BJ (cell line): ENCODE measurements at regions of chr6 and their contacts with region 1.

Region 1: DNA sequence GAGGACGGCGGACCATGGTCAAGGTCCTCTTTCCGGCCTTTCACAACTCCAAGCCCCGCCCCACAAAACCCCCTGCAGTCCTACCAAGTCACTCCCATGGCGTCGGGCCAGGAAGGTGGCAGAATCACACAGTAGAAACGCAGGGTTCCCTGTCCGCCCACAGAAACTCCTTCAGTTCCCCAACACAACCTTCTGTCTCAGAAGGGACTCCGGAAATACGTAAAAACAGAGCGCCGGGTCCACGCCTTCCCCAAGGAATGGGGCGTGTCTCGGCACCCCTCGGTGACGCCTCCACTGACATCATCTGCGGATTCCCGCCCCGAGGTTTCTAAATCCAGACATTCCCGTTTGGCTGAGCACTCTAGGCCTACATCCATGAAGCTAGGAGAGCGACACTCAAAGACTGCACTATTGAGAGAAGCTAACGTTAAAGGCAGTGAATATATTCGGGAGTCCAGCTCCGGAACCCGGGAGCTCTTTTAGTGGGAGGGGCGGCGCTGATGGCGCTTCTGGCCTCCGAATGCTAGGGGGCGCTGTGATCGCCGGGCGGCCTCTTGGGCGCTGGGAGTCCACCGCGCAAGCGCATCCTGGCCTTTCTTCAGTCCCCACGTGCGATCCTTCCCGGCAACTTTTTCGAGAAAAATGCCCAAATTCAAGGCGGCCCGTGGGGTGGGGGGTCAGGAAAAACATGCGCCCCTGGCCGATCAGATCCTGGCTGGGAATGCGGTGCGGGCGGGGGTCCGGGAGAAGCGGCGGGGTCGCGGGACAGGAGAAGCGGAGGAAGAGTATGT is at the starts of genes BYSL and MED20:
- DNase-seq: peak; percentile 52
- H3K4me3 ChIP-seq: peak within 1 kb of the TSS; percentile 77
- H3K27me3 ChIP-seq: no peaks in the 10 kb centered on the region
- CTCF ChIP-seq: peak; percentile 98
- polyA plus RNA-seq, gene BYSL: 18.0 and 28.5 TPM in 2 replicates
- polyA plus RNA-seq, gene MED20: 33.0 and 34.4 TPM in 2 replicates

Region 2: GRCh38 chr6:41936073-41936837 is 15.1 kb after region 1 on chr6:
- CTCF ChIA-PET with region 1: interaction called, 83 read pairs
- POLR2A ChIA-PET with region 1: no interaction called
- DNase-seq: peak; percentile 64
- H3K4me3 ChIP-seq: no peak overlapping the region
- H3K27me3 ChIP-seq: no peaks in the 10 kb centered on the region
- CTCF ChIP-seq: peak; percentile 98

Region 3: DNA sequence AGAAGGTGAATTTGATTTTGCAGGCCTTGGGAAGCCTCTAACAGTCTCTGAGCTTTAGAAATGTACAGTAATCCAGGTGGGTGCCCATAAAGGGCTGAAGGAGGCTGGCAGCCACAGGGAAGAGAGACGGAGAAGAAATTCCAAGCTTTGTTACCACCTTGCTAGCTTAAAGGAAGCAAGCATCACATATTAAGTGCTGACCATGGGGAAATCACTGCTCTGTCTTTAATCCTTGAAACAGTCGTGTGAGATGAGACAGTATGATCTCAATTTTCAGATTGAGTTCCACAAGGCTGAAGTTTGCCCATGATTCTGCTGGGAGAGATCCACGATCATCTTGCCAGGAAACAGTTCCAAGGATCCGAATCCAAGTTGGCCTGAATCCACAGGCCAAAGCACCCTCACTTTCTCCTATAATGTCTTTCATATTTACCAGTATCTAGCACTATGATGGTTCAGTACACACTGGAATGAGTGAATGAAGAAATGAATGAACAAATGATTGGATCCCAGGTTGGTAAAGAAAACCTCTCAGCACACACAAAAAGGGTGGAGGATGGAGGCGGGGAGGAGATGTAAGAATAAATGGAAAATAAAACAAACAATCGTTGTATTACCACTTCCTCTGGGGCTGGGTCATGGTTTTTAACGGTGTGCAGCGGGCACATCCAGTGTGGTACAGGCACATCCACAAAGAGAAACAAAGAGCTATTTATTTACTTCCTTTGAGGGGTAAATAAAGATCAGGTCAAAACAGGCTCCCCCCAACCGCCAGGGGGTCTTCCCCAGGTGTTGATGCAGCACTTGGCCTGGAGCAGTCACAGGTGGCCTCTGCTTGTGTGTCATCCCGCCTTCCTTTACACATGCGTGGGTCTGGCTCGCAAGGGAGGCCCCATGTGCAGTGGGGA is 101.0 kb after region 1 on chr6:
- CTCF ChIA-PET with region 1: no interaction called
- POLR2A ChIA-PET with region 1: no interaction called
- DNase-seq: no peak
- H3K4me3 ChIP-seq: no peak overlapping the region
- H3K27me3 ChIP-seq: no peaks in the 10 kb centered on the region
- CTCF ChIP-seq: no peak

Region 4: GRCh38 chr6:42851599-42851998 is 930.5 kb after region 1 on chr6:
- CTCF ChIA-PET with region 1: no interaction called
- POLR2A ChIA-PET with region 1: no interaction called
- DNase-seq: no peak
- H3K4me3 ChIP-seq: no peak overlapping the region
- H3K27me3 ChIP-seq: no peaks in the 10 kb centered on the region
- CTCF ChIP-seq: no peak